HCT116 (cell line): ENCODE measurements at regions of chr2 and their contacts with region 1.

Region 1: DNA sequence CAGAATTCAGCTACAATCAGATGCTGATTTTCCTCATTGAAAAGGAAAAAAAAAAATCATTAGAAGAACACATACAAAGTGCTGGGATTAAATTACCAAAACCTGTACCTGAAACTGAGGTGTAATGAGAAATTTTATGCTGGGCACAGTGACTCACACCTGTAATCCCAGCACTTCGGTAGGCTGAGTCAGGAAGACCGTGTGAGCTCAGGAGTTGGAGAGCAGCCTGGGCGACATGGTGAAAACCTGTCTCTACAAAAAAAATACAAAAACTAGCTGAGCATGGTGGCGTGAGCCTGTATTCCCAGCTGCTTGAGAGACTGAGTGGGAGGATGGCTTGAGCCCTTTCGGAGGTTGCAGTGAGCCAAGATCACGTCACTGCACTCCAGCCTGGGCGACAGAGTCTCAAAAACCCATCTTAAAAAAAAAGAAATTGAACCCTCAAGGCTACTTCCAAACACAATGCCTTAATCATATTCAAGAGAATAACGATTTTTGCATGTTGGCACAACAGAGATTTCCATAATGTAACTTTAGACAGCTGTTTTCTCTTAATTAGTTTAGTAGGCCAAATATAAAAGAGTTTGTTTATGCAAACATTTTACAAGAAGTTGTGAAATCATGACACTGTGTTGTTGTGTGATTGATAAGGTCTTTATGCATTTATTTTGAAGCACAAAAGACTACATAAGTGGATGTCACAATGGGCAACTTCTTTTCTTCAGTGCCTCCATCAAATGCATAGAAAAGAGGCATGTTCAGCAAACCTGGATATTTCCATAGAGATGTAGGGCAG is 63.9 kb downstream of the FAM161A start:
- DNase-seq: no peak
- ATAC-seq: no peak
- H3K4me3 ChIP-seq: no peak overlapping the region
- H3K27ac ChIP-seq: no peak overlapping the region
- H3K4me1 ChIP-seq: peaks cover 0 to 7% of the 10 kb centered on the region in 2 experiments; a peak in 1 of 4 replicates
- H3K27me3 ChIP-seq: no peaks in the 10 kb centered on the region
- CTCF ChIP-seq: no peak
- POLR2A ChIP-seq: no peak
- RAD21 ChIP-seq: no peak

Region 2: GRCh38 chr2:61065715-61066709 is 724.0 kb before region 1 on chr2 and contains the start of gene SANBR:
- CTCF ChIA-PET with region 1: no interaction called
- POLR2A ChIA-PET with region 1: no interaction called
- RAD21 ChIA-PET with region 1: no interaction called
- intact Hi-C with region 1: no loop called
- DNase-seq: peak; percentile 75
- ATAC-seq: peak; percentile 96
- H3K4me3 ChIP-seq: peak within 1 kb of the TSS; percentile 58 to 70
- H3K27ac ChIP-seq: peak within 1 kb of the TSS; percentile 72
- H3K4me1 ChIP-seq: peaks cover 6 to 16% of the 10 kb centered on the region in 2 experiments; a peak in 3 of 4 replicates
- H3K27me3 ChIP-seq: no peaks in the 10 kb centered on the region
- CTCF ChIP-seq: no peak
- POLR2A ChIP-seq: peak; percentile 37
- RAD21 ChIP-seq: no peak
- total RNA-seq, gene SANBR: 4.6 TPM

Region 3: DNA sequence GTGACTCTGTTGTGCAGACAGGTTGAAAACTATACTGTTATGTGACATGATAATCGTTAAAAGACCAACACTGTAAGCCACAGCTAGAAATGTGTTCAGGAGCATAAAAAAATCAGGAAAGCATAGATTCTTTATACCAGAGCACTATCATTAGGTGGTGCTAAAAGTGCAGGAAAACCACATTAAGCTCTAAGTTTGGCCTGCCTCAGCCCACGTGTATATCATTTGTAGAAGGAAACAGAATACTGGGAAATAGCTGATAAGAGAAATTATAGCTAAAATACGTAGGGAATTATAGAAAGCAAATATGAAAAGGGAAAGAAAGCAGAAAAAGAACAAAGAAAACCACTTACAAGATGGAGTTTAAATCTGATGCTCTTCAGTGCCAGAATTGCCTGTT is 654.5 kb before region 1 on chr2:
- CTCF ChIA-PET with region 1: interaction called, 5 read pairs
- POLR2A ChIA-PET with region 1: no interaction called
- RAD21 ChIA-PET with region 1: no interaction called
- intact Hi-C with region 1: loop called (anchors 5 kb)
- DNase-seq: peak; percentile 13
- ATAC-seq: peak; percentile 70
- H3K4me3 ChIP-seq: no peak overlapping the region
- H3K27ac ChIP-seq: no peak overlapping the region
- H3K4me1 ChIP-seq: no peaks in the 10 kb centered on the region
- H3K27me3 ChIP-seq: no peaks in the 10 kb centered on the region
- CTCF ChIP-seq: peak; percentile 23 to 63 (median 28); a peak in 4 of 6 replicates
- POLR2A ChIP-seq: no peak
- RAD21 ChIP-seq: peak; percentile 84